ENCODE measurements at regions of chr20 and their contacts with region 1.

Region 1: GRCh38 chr20:50575847-50576720 is 65.9 kb downstream of the PTPN1 start:
- DNase-seq: peak; percentile 33 to 70 (median 41)
- H3K4me3 ChIP-seq: no peak overlapping the region
- H3K4me3 Mint-ChIP-seq: no peak overlapping the region
- H3K27ac ChIP-seq: no peak overlapping the region
- H3K27ac Mint-ChIP-seq: peak overlapping the region in 6 of 8 donors; percentile 23 to 69 (median 45)
- H3K4me1 ChIP-seq: peaks cover 7% of the 10 kb centered on the region
- H3K4me1 Mint-ChIP-seq: peaks cover 18 to 34% (median 28%) of the 10 kb centered on the region in 3 donors
- H3K27me3 ChIP-seq: no peaks in the 10 kb centered on the region
- H3K27me3 Mint-ChIP-seq: peaks cover 0 to 2% of the 10 kb centered on the region in 2 donors

Region 2: DNA sequence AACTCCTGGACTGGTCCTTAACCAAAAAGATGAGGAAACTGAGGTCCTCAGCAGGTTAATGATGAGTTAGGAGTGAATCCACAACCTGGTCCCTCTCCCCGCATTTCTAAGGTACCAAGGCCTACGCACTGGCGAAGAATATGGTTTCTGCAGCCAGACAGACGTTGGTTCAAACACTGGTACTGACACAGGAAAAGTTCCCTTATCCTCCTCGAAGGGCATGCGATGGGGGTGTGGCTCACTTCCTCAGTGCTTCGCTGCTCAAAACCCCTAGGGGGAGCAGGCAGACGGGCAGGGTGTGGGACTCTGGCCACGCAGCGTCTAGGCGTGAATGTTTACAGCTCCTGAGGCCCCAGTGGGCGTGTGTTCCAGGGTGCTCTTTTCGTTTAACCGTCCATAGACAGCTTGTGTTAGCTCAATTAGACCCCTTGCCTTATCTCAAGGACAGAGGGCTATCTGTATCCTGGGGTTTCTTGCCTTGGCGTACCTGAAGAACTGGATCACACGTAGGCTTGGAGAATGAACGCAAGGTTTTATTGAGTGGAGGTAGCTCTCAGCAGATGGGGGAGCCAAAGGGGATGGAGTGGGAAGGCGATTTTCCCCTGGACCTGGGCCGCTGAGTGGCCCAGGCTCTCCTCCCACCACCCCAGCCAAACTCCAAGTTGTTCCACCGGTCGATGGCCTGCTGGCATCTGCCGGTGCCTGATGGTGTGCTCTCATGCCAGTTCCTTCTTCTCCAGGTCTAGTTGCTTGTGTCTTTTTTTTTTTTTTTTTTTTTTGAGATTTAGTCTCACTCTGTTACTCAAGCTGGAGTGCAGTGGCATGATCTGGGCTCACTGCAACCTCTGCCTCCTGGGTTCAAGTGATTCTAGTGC is 97.7 kb before region 1 on chr20:
- CTCF ChIA-PET with region 1: interaction called, 12 read pairs
- POLR2A ChIA-PET with region 1: no interaction called
- DNase-seq: peak; percentile 55 to 82 (median 59)
- H3K4me3 ChIP-seq: no peak overlapping the region
- H3K4me3 Mint-ChIP-seq: peak overlapping the region in 3 of 7 donors; percentile 45 to 65 (median 61)
- H3K27ac ChIP-seq: no peak overlapping the region
- H3K27ac Mint-ChIP-seq: peak overlapping the region in 3 of 8 donors; percentile 38 to 88 (median 41)
- H3K4me1 ChIP-seq: peaks cover 15% of the 10 kb centered on the region
- H3K4me1 Mint-ChIP-seq: peaks cover 11 to 25% (median 17%) of the 10 kb centered on the region in 3 donors
- H3K27me3 ChIP-seq: no peaks in the 10 kb centered on the region
- H3K27me3 Mint-ChIP-seq: peaks cover under 1 to 2% of the 10 kb centered on the region in 2 donors

Region 3: GRCh38 chr20:50504231-50504823 is 71.8 kb before region 1 on chr20:
- CTCF ChIA-PET with region 1: interaction called, 49 read pairs
- POLR2A ChIA-PET with region 1: no interaction called
- DNase-seq: no peak
- H3K4me3 ChIP-seq: no peak overlapping the region
- H3K4me3 Mint-ChIP-seq: no peak overlapping the region
- H3K27ac ChIP-seq: peak overlapping the region; percentile 14
- H3K27ac Mint-ChIP-seq: peak overlapping the region in 2 of 8 donors; percentile 14 to 44
- H3K4me1 ChIP-seq: peaks cover 1% of the 10 kb centered on the region
- H3K4me1 Mint-ChIP-seq: peaks cover 0 to 5% (median 4%) of the 10 kb centered on the region in 3 donors
- H3K27me3 ChIP-seq: no peaks in the 10 kb centered on the region
- H3K27me3 Mint-ChIP-seq: no peaks in the 10 kb centered on the region

Region 4: GRCh38 chr20:50528804-50529351 is 47.2 kb before region 1 on chr20:
- CTCF ChIA-PET with region 1: no interaction called
- POLR2A ChIA-PET with region 1: no interaction called
- DNase-seq: no peak
- H3K4me3 ChIP-seq: no peak overlapping the region
- H3K4me3 Mint-ChIP-seq: peak overlapping the region in 6 of 7 donors; percentile 48 to 84 (median 53)
- H3K27ac ChIP-seq: no peak overlapping the region
- H3K27ac Mint-ChIP-seq: peak overlapping the region in 7 of 8 donors; percentile 12 to 76 (median 57)
- H3K4me1 ChIP-seq: peaks cover 76% of the 10 kb centered on the region
- H3K4me1 Mint-ChIP-seq: peaks cover 37 to 50% (median 49%) of the 10 kb centered on the region in 3 donors
- H3K27me3 ChIP-seq: no peaks in the 10 kb centered on the region
- H3K27me3 Mint-ChIP-seq: no peaks in the 10 kb centered on the region

Region 5: DNA sequence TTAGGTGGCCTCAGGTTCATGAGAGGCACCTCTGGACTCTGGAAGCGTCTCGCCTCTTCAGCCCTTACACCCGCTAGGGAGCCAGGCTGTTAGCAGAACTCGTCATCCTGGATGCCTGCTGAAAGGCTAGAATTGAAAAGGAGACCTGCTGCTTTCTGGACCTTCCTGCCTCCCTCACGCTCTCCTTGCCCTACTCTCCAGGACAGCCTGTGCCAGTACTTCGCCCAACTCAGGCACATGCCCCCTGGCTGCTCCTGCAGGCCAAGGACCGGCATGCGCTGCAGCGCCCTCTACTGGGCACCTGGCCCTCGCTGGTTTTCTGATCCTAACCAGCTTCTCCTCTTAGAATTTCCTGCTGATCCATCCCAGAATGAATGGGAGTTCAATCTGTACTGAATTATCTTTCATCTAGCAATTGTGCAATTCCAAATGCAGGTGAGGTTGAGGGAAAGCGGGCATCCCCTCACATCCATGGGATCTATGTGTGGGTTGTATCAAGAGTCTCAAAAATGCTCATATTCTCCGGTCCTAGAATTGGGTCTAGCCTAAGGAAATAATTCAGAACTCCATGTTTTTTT is 12.0 kb after region 1 on chr20:
- CTCF ChIA-PET with region 1: interaction called, 11 read pairs
- POLR2A ChIA-PET with region 1: no interaction called
- DNase-seq: peak; percentile 46 to 80 (median 65)
- H3K4me3 ChIP-seq: no peak overlapping the region
- H3K4me3 Mint-ChIP-seq: no peak overlapping the region
- H3K27ac ChIP-seq: no peak overlapping the region
- H3K27ac Mint-ChIP-seq: peak overlapping the region in 4 of 8 donors; percentile 19 to 63 (median 40)
- H3K4me1 ChIP-seq: no peaks in the 10 kb centered on the region
- H3K4me1 Mint-ChIP-seq: peaks cover 0 to 1% (median 0%) of the 10 kb centered on the region in 3 donors
- H3K27me3 ChIP-seq: no peaks in the 10 kb centered on the region
- H3K27me3 Mint-ChIP-seq: peaks cover 0 to 1% of the 10 kb centered on the region in 2 donors

Measured in CD8-positive, alpha-beta memory T cell (primary cell).